ENCODE measurements at regions of chr5 and their contacts with region 1.

Region 1: GRCh38 chr5:38193015-38193581 is 65.3 kb upstream of the EGFLAM start:
- DNase-seq: peak; percentile 55
- ATAC-seq: peak; percentile 86
- H3K4me3 ChIP-seq: no peak overlapping the region
- H3K27ac ChIP-seq: no peak overlapping the region
- H3K4me1 ChIP-seq: no peaks in the 10 kb centered on the region
- H3K27me3 ChIP-seq: peaks cover 16% of the 10 kb centered on the region
- CTCF ChIP-seq: peak; percentile 89

Region 2: DNA sequence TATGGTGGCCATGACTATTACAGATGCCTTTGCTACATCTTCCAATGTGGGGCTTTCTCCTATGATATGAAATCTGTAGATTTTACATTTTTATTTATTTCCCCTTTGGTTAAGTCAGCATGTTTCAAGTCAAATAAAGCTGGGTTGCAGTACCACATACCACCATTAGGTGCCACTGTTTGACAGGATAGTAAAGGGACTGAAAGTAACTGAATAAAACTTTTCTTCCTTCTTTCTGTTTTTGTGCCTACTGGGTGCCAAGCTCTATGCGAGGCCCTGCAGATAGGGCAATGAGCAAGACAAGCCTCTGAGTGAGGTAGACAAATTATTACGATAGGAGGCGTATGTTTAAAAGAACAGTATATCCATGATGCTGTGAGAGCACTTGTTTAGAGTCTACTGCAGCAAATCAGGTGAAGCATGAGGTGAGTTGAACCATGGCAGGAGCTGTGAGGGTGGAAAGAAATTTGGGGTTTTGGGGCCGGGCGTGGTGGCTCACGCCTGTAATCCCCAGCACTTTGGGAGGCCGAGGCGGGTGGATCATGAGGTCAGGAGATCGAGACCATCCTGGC is 418.1 kb before region 1 on chr5:
- CTCF ChIA-PET with region 1: no interaction called
- POLR2A ChIA-PET with region 1: no interaction called
- in situ Hi-C with region 1: no loop called
- intact Hi-C with region 1: loop called (anchors 10 kb)
- DNase-seq: no peak
- ATAC-seq: no peak
- H3K4me3 ChIP-seq: no peak overlapping the region
- H3K27ac ChIP-seq: no peak overlapping the region
- H3K4me1 ChIP-seq: no peaks in the 10 kb centered on the region
- H3K27me3 ChIP-seq: no peaks in the 10 kb centered on the region
- CTCF ChIP-seq: peak; percentile 78

Region 3: DNA sequence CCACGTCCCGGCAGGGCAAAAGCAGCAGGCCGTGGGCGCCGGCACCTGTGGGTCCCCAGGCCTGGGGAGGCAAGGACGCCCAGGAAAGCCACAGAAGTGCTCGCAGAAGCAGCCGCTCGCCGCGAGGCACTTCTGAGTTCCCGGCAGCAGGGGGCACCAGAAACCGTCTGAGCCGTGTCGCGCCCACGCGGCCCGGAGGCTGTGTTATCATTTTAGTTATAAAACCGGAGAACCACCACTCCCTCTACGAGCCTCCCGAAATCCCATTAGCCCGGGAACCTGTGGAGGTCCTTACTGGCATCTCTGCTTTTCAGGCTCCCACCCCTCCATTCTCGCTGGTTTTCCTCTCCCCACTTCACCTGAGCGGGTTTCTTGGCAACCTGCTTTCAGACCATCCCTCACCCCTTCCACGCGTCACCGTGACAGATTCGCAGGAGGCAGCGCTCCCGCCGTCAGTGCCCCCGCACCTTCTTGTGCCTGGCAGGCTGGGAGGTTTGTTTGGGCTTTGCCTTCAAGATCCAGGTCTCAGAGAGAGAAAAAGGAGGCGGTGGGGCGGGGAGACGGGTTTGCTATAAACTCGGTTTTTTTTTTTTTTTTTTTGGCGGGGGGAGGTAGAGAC is 355.6 kb before region 1 on chr5:
- CTCF ChIA-PET with region 1: interaction called, 6 read pairs
- POLR2A ChIA-PET with region 1: no interaction called
- in situ Hi-C with region 1: no loop called
- intact Hi-C with region 1: loop called (anchors 2 kb)
- DNase-seq: peak; percentile 38
- ATAC-seq: peak; percentile 79
- H3K4me3 ChIP-seq: peak overlapping the region; percentile 35 to 52
- H3K27ac ChIP-seq: no peak overlapping the region
- H3K4me1 ChIP-seq: peaks cover 13% of the 10 kb centered on the region
- H3K27me3 ChIP-seq: peaks cover 31% of the 10 kb centered on the region
- CTCF ChIP-seq: peak; percentile 92

Region 4: GRCh38 chr5:38023799-38024198 is 169.3 kb before region 1 on chr5:
- CTCF ChIA-PET with region 1: no interaction called
- POLR2A ChIA-PET with region 1: no interaction called
- in situ Hi-C with region 1: no loop called
- intact Hi-C with region 1: loop called (anchors 10 kb)
- DNase-seq: no peak
- ATAC-seq: no peak
- H3K4me3 ChIP-seq: no peak overlapping the region
- H3K27ac ChIP-seq: no peak overlapping the region
- H3K4me1 ChIP-seq: no peaks in the 10 kb centered on the region
- H3K27me3 ChIP-seq: peaks cover 17% of the 10 kb centered on the region
- CTCF ChIP-seq: peak; percentile 24; the same call in 1 of the 2 replicates

Measured in Panc1 (cell line).